CD8-positive, alpha-beta T cell (primary cell): ENCODE measurements at regions of chr20 and their contacts with region 1.

Region 1: GRCh38 chr20:45934586-45935415 is at the start of gene PCIF1:
- DNase-seq: peak; percentile 97 to 100 (median 98)
- ATAC-seq: peak; percentile 79
- H3K4me3 ChIP-seq: peak within 1 kb of the TSS; percentile 95 to 99
- H3K4me3 Mint-ChIP-seq: peak within 1 kb of the TSS; percentile 83
- H3K27ac ChIP-seq: peak within 1 kb of the TSS; percentile 94 to 98
- H3K27ac Mint-ChIP-seq: peak within 1 kb of the TSS; percentile 98
- H3K4me1 ChIP-seq: peaks cover 11% of the 10 kb centered on the region
- H3K4me1 Mint-ChIP-seq: peaks cover 29% of the 10 kb centered on the region
- H3K27me3 ChIP-seq: no peaks in the 10 kb centered on the region
- H3K27me3 Mint-ChIP-seq: no peaks in the 10 kb centered on the region
- CTCF ChIP-seq: no peak
- total RNA-seq, gene PCIF1: 112 to 118 TPM

Region 2: GRCh38 chr20:45592574-45593189 is 342.1 kb before region 1 on chr20:
- CTCF ChIA-PET with region 1: no interaction called
- POLR2A ChIA-PET with region 1: no interaction called
- intact Hi-C with region 1: no loop called
- DNase-seq: peak in 2 of 9 experiments; percentile 30 to 57
- ATAC-seq: peak; percentile 36
- H3K4me3 ChIP-seq: no peak overlapping the region
- H3K4me3 Mint-ChIP-seq: no peak overlapping the region
- H3K27ac ChIP-seq: no peak overlapping the region
- H3K27ac Mint-ChIP-seq: no peak overlapping the region
- H3K4me1 ChIP-seq: no peaks in the 10 kb centered on the region
- H3K4me1 Mint-ChIP-seq: no peaks in the 10 kb centered on the region
- H3K27me3 ChIP-seq: no peaks in the 10 kb centered on the region
- H3K27me3 Mint-ChIP-seq: peaks cover 10% of the 10 kb centered on the region
- CTCF ChIP-seq: peak; percentile 53

Region 3: DNA sequence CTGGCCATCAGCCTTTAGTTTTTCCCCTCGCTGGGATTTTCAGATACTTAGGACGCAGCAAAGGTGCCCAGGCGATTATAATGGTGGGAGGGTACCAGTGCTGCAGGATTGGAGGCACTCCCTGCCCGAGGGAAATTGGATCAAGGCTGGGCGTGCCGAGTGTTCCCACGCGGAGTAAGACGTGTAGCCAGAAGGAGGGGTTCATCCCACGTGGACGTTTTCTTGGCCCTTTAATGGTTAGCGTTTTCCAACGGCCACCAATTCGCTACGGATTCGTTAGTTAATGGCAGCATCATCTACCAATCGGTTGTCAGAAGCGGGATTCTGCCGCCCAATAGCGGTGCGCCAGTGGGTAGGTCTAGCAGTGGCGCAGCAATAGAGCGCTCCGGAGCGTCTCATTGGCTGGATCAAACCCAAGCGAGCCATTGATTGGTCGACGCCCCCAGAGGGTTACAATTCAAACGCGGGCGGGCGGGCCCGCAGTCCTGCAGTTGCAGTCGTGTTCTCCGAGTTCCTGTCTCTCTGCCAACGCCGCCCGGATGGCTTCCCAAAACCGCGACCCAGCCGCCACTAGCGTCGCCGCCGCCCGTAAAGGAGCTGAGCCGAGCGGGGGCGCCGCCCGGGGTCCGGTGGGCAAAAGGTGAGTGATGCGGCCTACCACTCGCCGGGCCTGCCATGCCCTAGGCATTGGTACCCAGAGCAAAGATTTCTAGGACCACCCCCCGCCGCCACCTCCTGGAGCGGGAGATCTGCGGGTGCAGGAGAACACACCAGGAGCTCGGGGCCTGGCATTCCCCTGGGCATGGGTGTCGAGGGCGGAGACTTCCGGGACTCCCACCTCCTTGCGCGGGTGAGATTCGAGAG is 122.4 kb before region 1 on chr20 and contains the start of gene UBE2C:
- CTCF ChIA-PET with region 1: no interaction called
- POLR2A ChIA-PET with region 1: interaction called, 8 read pairs
- intact Hi-C with region 1: loop called (anchors 1 kb)
- DNase-seq: peak; percentile 87 to 98 (median 92)
- ATAC-seq: peak; percentile 99
- H3K4me3 ChIP-seq: peak within 1 kb of the TSS; percentile 62 to 67
- H3K4me3 Mint-ChIP-seq: peak within 1 kb of the TSS; percentile 80
- H3K27ac ChIP-seq: peak within 1 kb of the TSS in 1 of 2 experiments; percentile 51
- H3K27ac Mint-ChIP-seq: peak within 1 kb of the TSS; percentile 77
- H3K4me1 ChIP-seq: peaks cover 10% of the 10 kb centered on the region
- H3K4me1 Mint-ChIP-seq: peaks cover 10% of the 10 kb centered on the region
- H3K27me3 ChIP-seq: no peaks in the 10 kb centered on the region
- H3K27me3 Mint-ChIP-seq: no peaks in the 10 kb centered on the region
- CTCF ChIP-seq: no peak
- total RNA-seq, gene UBE2C: 0.60 TPM in 1 of 2 experiments, not detected in the other

Region 4: GRCh38 chr20:45880988-45881788 is 53.6 kb before region 1 on chr20 and contains the start of gene ZSWIM1:
- CTCF ChIA-PET with region 1: interaction called, 4 read pairs
- POLR2A ChIA-PET with region 1: interaction called, 23 read pairs
- intact Hi-C with region 1: loop called (anchors 1 kb)
- DNase-seq: peak; percentile 96 to 100 (median 99)
- ATAC-seq: peak; percentile 97
- H3K4me3 ChIP-seq: peak within 1 kb of the TSS; percentile 71 to 82
- H3K4me3 Mint-ChIP-seq: peak within 1 kb of the TSS; percentile 91
- H3K27ac ChIP-seq: peak within 1 kb of the TSS; percentile 75 to 87
- H3K27ac Mint-ChIP-seq: peak within 1 kb of the TSS; percentile 96
- H3K4me1 ChIP-seq: peaks cover 18% of the 10 kb centered on the region
- H3K4me1 Mint-ChIP-seq: peaks cover 40% of the 10 kb centered on the region
- H3K27me3 ChIP-seq: no peaks in the 10 kb centered on the region
- H3K27me3 Mint-ChIP-seq: no peaks in the 10 kb centered on the region
- CTCF ChIP-seq: no peak
- total RNA-seq, gene ZSWIM1: 8.5 to 9.2 TPM

Region 5: GRCh38 chr20:45924391-45925261 is 10.2 kb before region 1 on chr20:
- CTCF ChIA-PET with region 1: interaction called, 3 read pairs
- POLR2A ChIA-PET with region 1: interaction called, 45 read pairs
- intact Hi-C with region 1: no loop called
- DNase-seq: no peak
- ATAC-seq: no peak
- H3K4me3 ChIP-seq: no peak overlapping the region
- H3K4me3 Mint-ChIP-seq: no peak overlapping the region
- H3K27ac ChIP-seq: no peak overlapping the region
- H3K27ac Mint-ChIP-seq: no peak overlapping the region
- H3K4me1 ChIP-seq: no peaks in the 10 kb centered on the region
- H3K4me1 Mint-ChIP-seq: peaks cover 3% of the 10 kb centered on the region
- H3K27me3 ChIP-seq: no peaks in the 10 kb centered on the region
- H3K27me3 Mint-ChIP-seq: peaks cover 10% of the 10 kb centered on the region
- CTCF ChIP-seq: no peak

Region 6: DNA sequence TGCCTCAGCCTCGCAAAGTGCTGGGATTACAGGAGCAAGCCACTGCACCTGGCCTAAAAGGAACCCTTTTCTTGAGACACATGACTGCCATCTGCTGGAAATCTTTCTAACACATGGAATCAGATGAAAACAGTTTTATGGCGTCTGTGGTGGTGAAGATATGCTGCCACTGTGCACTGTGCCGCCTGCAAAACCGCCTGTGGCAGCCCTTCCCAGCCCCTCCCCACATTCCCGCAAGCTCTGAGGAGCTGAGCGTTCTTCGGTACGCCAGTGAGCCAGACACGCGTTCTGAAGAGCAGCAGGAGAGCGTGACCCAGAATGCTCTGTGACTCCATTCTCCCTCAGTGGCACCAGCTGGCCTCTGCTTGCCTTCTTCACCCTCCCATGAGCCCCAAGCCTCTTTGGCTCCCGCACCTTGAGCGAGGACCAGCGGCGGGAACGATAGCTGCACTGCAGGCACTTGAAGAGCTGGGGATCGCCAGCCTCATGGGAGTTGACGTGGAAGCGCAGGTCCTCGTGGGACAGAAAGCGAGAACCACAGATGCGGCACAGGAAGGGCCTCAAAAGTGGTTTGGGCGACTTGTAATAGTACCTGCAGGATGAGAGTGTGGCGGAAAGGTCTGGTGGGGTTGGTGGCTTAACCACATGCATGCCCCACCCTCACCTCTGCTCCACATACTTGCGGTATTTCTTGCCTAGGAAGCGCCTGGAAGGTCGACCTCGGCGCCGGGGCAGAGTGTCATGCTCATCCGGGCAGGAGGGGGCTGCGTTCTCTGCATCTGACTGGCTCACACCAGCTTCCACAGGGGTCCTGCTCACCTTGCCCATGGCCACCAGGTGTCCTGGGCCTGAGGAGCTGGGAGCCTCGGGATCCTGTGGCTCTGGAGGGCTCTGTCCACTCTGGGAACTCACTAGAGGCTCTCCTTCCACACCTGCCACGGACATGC is 28.5 kb after region 1 on chr20:
- CTCF ChIA-PET with region 1: interaction called, 12 read pairs
- POLR2A ChIA-PET with region 1: interaction called, 9 read pairs
- intact Hi-C with region 1: loop called in 1 of 2 experiments (anchors 1 kb)
- DNase-seq: peak in 2 of 9 experiments; percentile 60 to 70
- ATAC-seq: peak; percentile 69
- H3K4me3 ChIP-seq: no peak overlapping the region
- H3K4me3 Mint-ChIP-seq: no peak overlapping the region
- H3K27ac ChIP-seq: no peak overlapping the region
- H3K27ac Mint-ChIP-seq: no peak overlapping the region
- H3K4me1 ChIP-seq: no peaks in the 10 kb centered on the region
- H3K4me1 Mint-ChIP-seq: peaks cover 2% of the 10 kb centered on the region
- H3K27me3 ChIP-seq: no peaks in the 10 kb centered on the region
- H3K27me3 Mint-ChIP-seq: no peaks in the 10 kb centered on the region
- CTCF ChIP-seq: peak; percentile 19